ENCODE measurements at regions of chr1 and their contacts with region 1.

Region 1: GRCh38 chr1:179310721-179311120 is 17.1 kb downstream of the SOAT1 start:
- H3K4me3 Mint-ChIP-seq: no peak overlapping the region
- H3K27ac Mint-ChIP-seq: no peak overlapping the region
- H3K4me1 Mint-ChIP-seq: peaks cover 52% of the 10 kb centered on the region
- H3K27me3 Mint-ChIP-seq: no peaks in the 10 kb centered on the region

Region 2: DNA sequence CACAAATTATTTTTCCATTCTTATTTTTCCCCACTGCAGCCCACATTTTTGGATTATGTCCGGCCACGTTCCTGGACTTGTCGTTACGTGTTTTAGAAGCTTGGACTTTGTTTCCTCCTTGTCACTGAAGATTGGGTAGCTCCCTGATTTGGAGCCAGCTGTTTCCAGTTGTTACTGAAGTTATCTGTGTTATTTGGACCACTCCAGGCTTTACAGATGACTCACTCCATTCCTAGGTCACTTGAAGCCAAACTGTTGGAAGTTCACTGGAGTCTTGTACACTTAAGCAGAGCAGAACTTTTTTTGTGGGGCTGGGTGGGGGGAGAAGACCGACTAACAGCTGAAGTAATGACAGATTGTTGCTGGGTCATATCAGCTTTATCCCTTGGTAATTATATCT is 42.8 kb after region 1 on chr1:
- intact Hi-C with region 1: loop called (anchors 5 kb)
- H3K4me3 Mint-ChIP-seq: no peak overlapping the region
- H3K27ac Mint-ChIP-seq: no peak overlapping the region
- H3K4me1 Mint-ChIP-seq: peaks cover 5% of the 10 kb centered on the region
- H3K27me3 Mint-ChIP-seq: no peaks in the 10 kb centered on the region